ENCODE measurements at regions of chr20 and their contacts with region 1.

Region 1: GRCh38 chr20:31587545-31588389 is 17.3 kb upstream of the ID1 start:
- DNase-seq: peak in 2 of 3 donors; percentile 43 to 61
- H3K4me3 ChIP-seq: peak overlapping the region; percentile 46 to 75 (median 56)
- H3K27ac ChIP-seq: no peak overlapping the region
- H3K4me1 ChIP-seq: peaks cover 0 to 20% (median 11%) of the 10 kb centered on the region in 4 experiments
- H3K27me3 ChIP-seq: peaks cover 0 to 4% (median 0%) of the 10 kb centered on the region in 5 experiments

Region 2: DNA sequence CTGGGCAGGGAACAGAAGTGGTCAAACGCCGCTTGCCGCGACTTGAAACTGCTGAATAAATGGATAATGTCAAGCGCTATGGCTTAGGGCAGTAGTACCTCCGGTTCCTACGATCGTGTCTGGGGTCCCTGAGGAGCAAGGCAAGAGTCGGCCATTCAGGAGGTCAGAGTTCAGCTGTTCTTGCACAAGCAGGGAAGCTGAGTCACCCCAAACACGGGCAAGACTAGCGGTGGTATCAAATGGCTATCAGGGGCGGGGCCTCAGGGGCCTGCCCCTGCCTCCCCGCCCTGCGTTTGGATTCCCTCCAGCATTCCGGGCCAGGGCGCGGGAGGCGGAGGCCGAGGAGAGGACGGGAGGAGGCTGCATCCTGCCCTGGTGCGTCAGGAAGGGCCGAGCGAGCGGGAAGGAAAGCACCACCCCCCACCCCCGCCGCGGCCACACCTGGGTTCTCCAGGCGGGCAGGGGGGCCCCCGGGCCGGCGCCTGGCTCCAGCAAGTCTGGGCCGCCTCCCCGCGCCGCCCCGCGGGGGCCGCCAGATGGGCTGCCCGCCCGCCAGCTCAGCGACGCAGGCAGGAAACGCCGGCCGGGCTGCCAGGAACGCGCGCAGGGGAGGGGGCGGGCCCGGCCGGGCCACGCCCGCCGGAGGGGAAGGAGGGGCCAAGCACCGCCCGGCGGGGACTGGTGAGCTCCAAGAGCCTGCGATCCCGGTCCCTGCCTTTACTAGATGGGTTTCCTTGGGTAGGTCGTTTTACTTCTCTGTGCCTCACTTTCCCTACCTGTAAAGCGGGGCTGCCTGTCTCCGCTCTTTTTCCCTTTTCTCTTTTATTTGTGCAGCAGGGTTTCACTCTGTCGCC is 14.8 kb before region 1 on chr20:
- CTCF ChIA-PET with region 1: interaction called, 12 read pairs
- POLR2A ChIA-PET with region 1: interaction called, 7 read pairs
- DNase-seq: peak; percentile 88 to 97 (median 95)
- H3K4me3 ChIP-seq: peak overlapping the region; percentile 53 to 92 (median 76)
- H3K27ac ChIP-seq: peak overlapping the region; percentile 77 to 86
- H3K4me1 ChIP-seq: peaks cover 0 to 44% (median 37%) of the 10 kb centered on the region in 4 experiments
- H3K27me3 ChIP-seq: no peaks in the 10 kb centered on the region